ENCODE measurements at regions of chr20 and their contacts with region 1.

Region 1: GRCh38 chr20:3316136-3316535 is 77.1 kb upstream of the SLC4A11 start:
- DNase-seq: no peak
- H3K4me3 Mint-ChIP-seq: no peak overlapping the region
- H3K27ac Mint-ChIP-seq: no peak overlapping the region
- H3K4me1 Mint-ChIP-seq: no peaks in the 10 kb centered on the region
- H3K27me3 Mint-ChIP-seq: no peaks in the 10 kb centered on the region

Region 2: GRCh38 chr20:3051385-3052019 is 264.6 kb before region 1 on chr20:
- intact Hi-C with region 1: loop called (anchors 5 kb)
- DNase-seq: no peak
- H3K4me3 Mint-ChIP-seq: no peak overlapping the region
- H3K27ac Mint-ChIP-seq: no peak overlapping the region
- H3K4me1 Mint-ChIP-seq: peaks cover 9% of the 10 kb centered on the region
- H3K27me3 Mint-ChIP-seq: no peaks in the 10 kb centered on the region

Region 3: DNA sequence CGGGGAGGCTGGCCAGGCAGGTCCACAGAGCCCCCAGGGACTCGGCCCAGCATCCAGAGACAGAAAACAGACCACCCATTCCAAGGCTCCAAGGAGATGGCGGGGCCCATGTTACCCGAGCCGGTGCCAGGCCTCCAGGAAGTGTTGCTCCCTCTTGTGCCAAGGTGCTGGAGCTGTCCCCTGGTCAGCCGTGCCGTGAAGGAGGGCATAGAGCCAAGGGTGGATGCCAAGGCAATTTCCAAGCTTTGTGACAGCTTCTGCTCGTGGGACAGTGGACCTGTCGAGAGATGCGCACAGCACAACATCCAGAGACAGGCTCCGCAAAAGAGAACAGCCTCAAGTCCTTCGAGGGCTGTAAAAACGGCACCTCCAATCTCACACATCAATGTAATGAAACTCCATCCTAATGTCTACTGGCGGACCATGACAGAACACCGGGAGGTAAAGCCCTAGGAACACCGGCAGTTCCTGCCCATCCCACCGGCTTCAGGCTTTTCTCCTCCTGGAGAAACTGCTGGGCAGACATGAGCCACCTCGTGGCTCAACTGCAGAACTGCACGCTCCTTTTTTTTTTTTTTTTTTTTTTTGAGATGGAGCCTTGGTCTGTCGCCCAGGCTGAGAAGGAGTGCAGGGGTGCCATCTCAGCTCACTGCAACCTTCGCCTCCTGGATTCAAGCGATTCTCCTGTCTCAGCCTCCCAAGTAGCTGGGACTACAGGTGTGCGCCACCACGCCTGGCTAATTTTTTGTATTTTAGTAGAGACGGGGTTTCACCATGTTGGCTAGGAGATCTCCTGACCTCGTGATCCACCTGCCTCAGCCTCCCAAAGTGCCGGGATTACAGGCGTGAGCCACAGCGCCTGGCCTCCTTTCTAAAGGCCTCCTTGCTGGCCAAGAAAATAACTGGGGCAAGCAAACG is 200.7 kb before region 1 on chr20:
- intact Hi-C with region 1: loop called (anchors 1 kb)
- DNase-seq: peak; percentile 74
- H3K4me3 Mint-ChIP-seq: no peak overlapping the region
- H3K27ac Mint-ChIP-seq: no peak overlapping the region
- H3K4me1 Mint-ChIP-seq: peaks cover 5% of the 10 kb centered on the region
- H3K27me3 Mint-ChIP-seq: no peaks in the 10 kb centered on the region

Region 4: GRCh38 chr20:3218307-3218988 is 97.7 kb before region 1 on chr20:
- intact Hi-C with region 1: loop called (anchors 1 kb)
- DNase-seq: peak; percentile 93
- H3K4me3 Mint-ChIP-seq: no peak overlapping the region
- H3K27ac Mint-ChIP-seq: no peak overlapping the region
- H3K4me1 Mint-ChIP-seq: peaks cover 5% of the 10 kb centered on the region
- H3K27me3 Mint-ChIP-seq: no peaks in the 10 kb centered on the region

Measured in activated CD4-positive, alpha-beta T cell treated with anti-CD3 and anti-CD28 coated beads, Interleukin-2, amount 10 ng/mL, durations not matched to agents 24 days and 14 days (primary cell).